ENCODE measurements at regions of chr17 and their contacts with region 1.

Region 1: GRCh38 chr17:20992987-20993862 is 49.6 kb downstream of the USP22 start:
- DNase-seq: peak in 2 of 5 donors; percentile 60 to 66
- ATAC-seq: peak in 3 of 4 donors; percentile 35 to 60 (median 55)
- H3K4me3 ChIP-seq: peak overlapping the region in 6 of 12 donors; percentile 15 to 41 (median 33)
- H3K27ac ChIP-seq: peak overlapping the region in 4 of 12 donors; percentile 10 to 21 (median 16)
- H3K4me1 ChIP-seq: peaks cover 0 to 36% (median 9%) of the 10 kb centered on the region in 12 donors
- H3K27me3 ChIP-seq: no peaks in the 10 kb centered on the region
- CTCF ChIP-seq: peak; percentile 78 to 95 (median 88)
- POLR2A ChIP-seq: no peak

Region 2: DNA sequence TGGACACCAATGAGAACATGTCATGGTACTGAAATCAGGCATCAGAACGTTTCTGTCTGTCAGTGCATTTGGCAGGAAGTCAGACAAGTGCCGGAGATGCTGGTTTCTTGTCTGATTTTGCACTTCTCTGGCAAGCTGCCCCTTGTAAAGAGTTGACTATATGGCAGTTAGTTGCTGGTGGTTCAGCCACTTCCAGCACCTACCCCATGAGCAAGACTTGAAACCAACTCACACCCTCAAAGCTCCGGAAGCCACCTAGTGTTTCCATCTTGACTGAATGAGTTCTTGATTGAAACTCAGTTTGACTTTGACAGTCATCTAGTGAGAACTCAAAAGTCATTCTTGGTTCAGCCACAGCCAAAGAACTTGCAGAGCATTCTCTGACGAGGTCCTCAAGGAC is 758.9 kb before region 1 on chr17:
- intact Hi-C with region 1: loop called in 2 of 10 experiments (anchors 10 kb)
- DNase-seq: no peak
- ATAC-seq: no peak
- H3K4me3 ChIP-seq: no peak overlapping the region
- H3K27ac ChIP-seq: no peak overlapping the region
- H3K4me1 ChIP-seq: peaks cover 0 to 4% (median 0%) of the 10 kb centered on the region in 12 donors
- H3K27me3 ChIP-seq: no peaks in the 10 kb centered on the region
- CTCF ChIP-seq: no peak
- POLR2A ChIP-seq: no peak

Region 3: GRCh38 chr17:20246692-20247091 is 746.5 kb before region 1 on chr17:
- intact Hi-C with region 1: no loop called
- DNase-seq: no peak
- ATAC-seq: no peak
- H3K4me3 ChIP-seq: no peak overlapping the region
- H3K27ac ChIP-seq: no peak overlapping the region
- H3K4me1 ChIP-seq: no peaks in the 10 kb centered on the region
- H3K27me3 ChIP-seq: no peaks in the 10 kb centered on the region
- CTCF ChIP-seq: no peak
- POLR2A ChIP-seq: no peak

Region 4: DNA sequence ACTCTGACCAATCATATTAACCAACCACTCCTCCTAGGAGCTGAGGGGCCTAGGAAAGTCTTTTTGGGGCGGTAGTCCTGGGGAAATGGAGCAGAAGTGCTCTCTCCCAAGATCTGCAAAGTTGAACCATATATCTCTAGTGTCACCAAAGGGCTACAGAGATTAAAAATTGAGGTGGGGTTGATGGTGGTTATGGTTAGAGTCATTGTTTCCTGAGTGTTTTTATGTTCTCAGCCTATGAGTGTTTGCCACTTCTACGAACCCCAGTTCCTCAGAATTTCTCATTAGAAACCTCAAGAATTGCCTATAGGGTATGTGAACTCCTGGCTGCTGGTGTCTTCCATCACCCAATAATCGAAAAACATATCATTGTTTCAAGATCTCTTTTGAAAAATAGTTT is 195.9 kb before region 1 on chr17:
- intact Hi-C with region 1: loop called in 5 of 10 experiments (anchors 5 to 10 kb)
- DNase-seq: no peak
- ATAC-seq: no peak
- H3K4me3 ChIP-seq: no peak overlapping the region
- H3K27ac ChIP-seq: no peak overlapping the region
- H3K4me1 ChIP-seq: no peaks in the 10 kb centered on the region
- H3K27me3 ChIP-seq: peaks cover 0 to 3% (median 0%) of the 10 kb centered on the region in 9 donors
- CTCF ChIP-seq: no peak
- POLR2A ChIP-seq: no peak

Region 5: GRCh38 chr17:20825539-20825938 is 167.7 kb before region 1 on chr17:
- intact Hi-C with region 1: loop called in 1 of 10 experiments (anchors 10 kb)
- DNase-seq: no peak
- ATAC-seq: no peak
- H3K4me3 ChIP-seq: no peak overlapping the region
- H3K27ac ChIP-seq: no peak overlapping the region
- H3K4me1 ChIP-seq: no peaks in the 10 kb centered on the region
- H3K27me3 ChIP-seq: peaks cover 0 to 4% (median 0%) of the 10 kb centered on the region in 9 donors
- CTCF ChIP-seq: no peak
- POLR2A ChIP-seq: no peak

Region 6: GRCh38 chr17:20908373-20909273 is 84.6 kb before region 1 on chr17:
- intact Hi-C with region 1: loop called in 6 of 10 experiments (anchors 2 to 10 kb)
- DNase-seq: peak; percentile 92 to 96 (median 93)
- ATAC-seq: peak; percentile 100
- H3K4me3 ChIP-seq: peak overlapping the region; percentile 9 to 63 (median 52)
- H3K27ac ChIP-seq: peak overlapping the region; percentile 75 to 93 (median 88)
- H3K4me1 ChIP-seq: peaks cover 0 to 13% (median 9%) of the 10 kb centered on the region in 12 donors
- H3K27me3 ChIP-seq: no peaks in the 10 kb centered on the region
- CTCF ChIP-seq: peak; percentile 48 to 84 (median 60)
- POLR2A ChIP-seq: peak in 1 of 2 donors; percentile 78

Region 7: DNA sequence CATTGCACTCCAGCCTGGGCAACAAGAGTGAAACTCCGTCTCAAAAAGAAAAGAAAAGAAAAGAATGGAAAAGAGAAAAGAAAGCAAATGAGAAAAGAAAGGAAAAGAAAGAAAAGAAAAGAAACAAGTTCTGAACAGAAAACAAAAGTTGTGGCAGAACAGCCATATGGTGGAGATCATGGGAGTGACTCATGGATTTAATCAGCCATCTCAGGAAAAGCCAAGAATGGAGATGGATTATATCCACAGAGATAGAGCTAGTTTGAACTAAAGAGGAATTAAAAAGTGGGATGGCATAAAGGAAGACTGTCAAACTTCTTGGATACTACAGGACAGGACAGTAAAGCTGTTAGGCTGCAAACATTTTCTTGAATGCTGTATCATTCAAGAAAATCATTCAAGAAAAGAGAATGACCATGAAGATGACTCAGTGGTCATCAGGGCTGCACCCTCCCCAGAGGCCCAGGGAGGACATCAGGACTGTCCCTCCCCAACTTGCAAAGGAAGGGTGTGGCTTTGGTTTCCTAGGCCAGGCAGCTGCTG is 71.0 kb before region 1 on chr17:
- intact Hi-C with region 1: loop called in 1 of 10 experiments (anchors 10 kb)
- DNase-seq: peak in 4 of 5 donors; percentile 40 to 65 (median 53)
- ATAC-seq: peak; percentile 23 to 85 (median 74)
- H3K4me3 ChIP-seq: peak overlapping the region in 4 of 12 donors; percentile 11 to 48 (median 28)
- H3K27ac ChIP-seq: peak overlapping the region in 11 of 12 donors; percentile 10 to 81 (median 59)
- H3K4me1 ChIP-seq: peaks cover 0 to 15% (median 0%) of the 10 kb centered on the region in 12 donors
- H3K27me3 ChIP-seq: no peaks in the 10 kb centered on the region
- CTCF ChIP-seq: no peak
- POLR2A ChIP-seq: no peak

Region 8: GRCh38 chr17:20955427-20956323 is 37.5 kb before region 1 on chr17:
- intact Hi-C with region 1: no loop called
- DNase-seq: peak in 1 of 5 donors; percentile 45
- ATAC-seq: peak; percentile 47 to 92 (median 86)
- H3K4me3 ChIP-seq: peak overlapping the region in 1 of 12 donors; percentile 20
- H3K27ac ChIP-seq: peak overlapping the region in 8 of 12 donors; percentile 47 to 66 (median 56)
- H3K4me1 ChIP-seq: peaks cover 0 to 16% (median 0%) of the 10 kb centered on the region in 12 donors
- H3K27me3 ChIP-seq: peaks cover 0 to 4% (median 0%) of the 10 kb centered on the region in 9 donors
- CTCF ChIP-seq: no peak
- POLR2A ChIP-seq: no peak

Measured in heart left ventricle (tissue), 16 donors.